Activated CD8-positive, alpha-beta T cell treated with anti-CD3 and anti-CD28 coated beads, Interleukin-2, amount 10 ng/mL, durations not matched to agents 7 days and 5 days (primary cell): ENCODE measurements at regions of chr7 and their contacts with region 1.

Region 1: DNA sequence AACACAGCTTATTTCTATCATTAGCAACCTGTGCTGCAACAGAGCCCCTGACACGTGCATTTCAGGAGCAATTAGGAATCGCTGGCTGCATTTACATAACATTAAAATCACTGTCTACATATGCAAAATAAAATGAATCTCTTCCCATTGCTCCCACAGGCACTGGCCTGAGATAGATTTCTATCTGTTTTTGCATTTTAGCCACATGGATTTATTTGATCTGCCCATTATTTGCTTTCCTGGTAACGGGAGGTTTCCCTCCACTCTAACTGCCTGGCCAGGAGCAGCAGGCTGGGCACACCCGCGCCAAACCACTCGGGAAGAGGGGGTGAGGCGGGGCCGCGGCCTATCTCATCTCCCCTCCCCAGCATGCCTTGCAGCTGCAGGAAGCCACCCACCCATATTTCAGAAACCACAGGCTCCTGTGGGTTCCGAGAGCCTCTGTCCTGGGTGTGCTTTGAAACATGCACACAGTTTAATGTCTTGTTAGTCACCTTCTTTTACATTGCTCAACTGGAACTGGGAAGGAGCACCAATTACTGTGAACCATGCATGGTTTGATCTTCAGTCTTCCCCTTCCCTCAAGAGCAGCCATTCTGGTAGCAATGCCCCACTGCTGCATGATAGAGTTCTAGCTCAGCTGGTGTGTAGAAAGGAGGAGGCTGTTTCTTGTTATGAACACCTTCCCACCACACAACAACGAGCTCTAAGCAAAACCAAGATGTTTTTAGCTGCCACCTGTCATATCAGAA is 37.7 kb upstream of the IKZF1 start:
- DNase-seq: peak; percentile 91
- ATAC-seq: peak; percentile 71
- H3K4me3 Mint-ChIP-seq: peak overlapping the region; percentile 69
- H3K27ac Mint-ChIP-seq: peak overlapping the region; percentile 98
- H3K4me1 Mint-ChIP-seq: peaks cover 95% of the 10 kb centered on the region
- H3K27me3 Mint-ChIP-seq: no peaks in the 10 kb centered on the region

Region 2: GRCh38 chr7:49995681-49996080 is 271.1 kb before region 1 on chr7:
- CTCF ChIA-PET with region 1: no interaction called
- POLR2A ChIA-PET with region 1: no interaction called
- DNase-seq: no peak
- ATAC-seq: no peak
- H3K4me3 Mint-ChIP-seq: no peak overlapping the region
- H3K27ac Mint-ChIP-seq: no peak overlapping the region
- H3K4me1 Mint-ChIP-seq: no peaks in the 10 kb centered on the region
- H3K27me3 Mint-ChIP-seq: no peaks in the 10 kb centered on the region

Region 3: GRCh38 chr7:50212666-50213621 is 53.9 kb before region 1 on chr7:
- CTCF ChIA-PET with region 1: interaction called, 113 read pairs
- POLR2A ChIA-PET with region 1: interaction called, 48 read pairs
- DNase-seq: peak; percentile 68
- ATAC-seq: peak; percentile 66
- H3K4me3 Mint-ChIP-seq: peak overlapping the region; percentile 9
- H3K27ac Mint-ChIP-seq: peak overlapping the region; percentile 94
- H3K4me1 Mint-ChIP-seq: peaks cover 99% of the 10 kb centered on the region
- H3K27me3 Mint-ChIP-seq: no peaks in the 10 kb centered on the region

Region 4: DNA sequence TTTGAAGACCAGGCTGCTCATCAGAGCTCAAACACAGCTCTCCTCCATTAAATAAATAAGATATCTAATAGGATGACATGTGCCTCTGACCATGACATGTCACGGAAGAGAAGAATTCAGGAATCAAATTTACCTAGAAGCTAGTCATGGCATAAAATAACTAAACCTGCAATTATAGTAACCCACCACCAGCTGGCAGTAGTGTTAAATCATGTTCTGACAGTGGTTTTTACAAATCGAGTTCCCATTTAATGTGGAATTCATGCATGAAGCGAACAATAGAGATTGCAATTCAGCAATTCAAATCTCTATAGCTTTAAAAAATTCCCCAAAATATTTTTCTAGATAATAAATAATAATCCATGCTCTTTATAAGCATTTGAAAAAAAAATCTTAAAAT is 36.8 kb before region 1 on chr7:
- CTCF ChIA-PET with region 1: interaction called, 72 read pairs
- POLR2A ChIA-PET with region 1: no interaction called
- DNase-seq: no peak
- ATAC-seq: no peak
- H3K4me3 Mint-ChIP-seq: no peak overlapping the region
- H3K27ac Mint-ChIP-seq: no peak overlapping the region
- H3K4me1 Mint-ChIP-seq: peaks cover 51% of the 10 kb centered on the region
- H3K27me3 Mint-ChIP-seq: no peaks in the 10 kb centered on the region

Region 5: GRCh38 chr7:50281680-50282445 is 15.1 kb after region 1 on chr7:
- CTCF ChIA-PET with region 1: interaction called, 59 read pairs
- POLR2A ChIA-PET with region 1: interaction called, 20 read pairs
- DNase-seq: peak; percentile 51
- ATAC-seq: peak; percentile 75
- H3K4me3 Mint-ChIP-seq: peak overlapping the region; percentile 56
- H3K27ac Mint-ChIP-seq: peak overlapping the region; percentile 87
- H3K4me1 Mint-ChIP-seq: peaks cover 66% of the 10 kb centered on the region
- H3K27me3 Mint-ChIP-seq: no peaks in the 10 kb centered on the region

Region 6: GRCh38 chr7:50317221-50317678 is 50.4 kb after region 1 on chr7:
- CTCF ChIA-PET with region 1: interaction called, 73 read pairs
- POLR2A ChIA-PET with region 1: interaction called, 142 read pairs
- DNase-seq: peak; percentile 71
- ATAC-seq: peak; percentile 71
- H3K4me3 Mint-ChIP-seq: peak overlapping the region; percentile 76
- H3K27ac Mint-ChIP-seq: peak overlapping the region; percentile 93
- H3K4me1 Mint-ChIP-seq: peaks cover 94% of the 10 kb centered on the region
- H3K27me3 Mint-ChIP-seq: no peaks in the 10 kb centered on the region

Region 7: GRCh38 chr7:50641442-50642405 is 374.9 kb after region 1 on chr7:
- CTCF ChIA-PET with region 1: no interaction called
- POLR2A ChIA-PET with region 1: no interaction called
- DNase-seq: peak; percentile 21
- ATAC-seq: no peak
- H3K4me3 Mint-ChIP-seq: no peak overlapping the region
- H3K27ac Mint-ChIP-seq: no peak overlapping the region
- H3K4me1 Mint-ChIP-seq: peaks cover 19% of the 10 kb centered on the region
- H3K27me3 Mint-ChIP-seq: peaks cover 13% of the 10 kb centered on the region